AG04450 (cell line): ENCODE measurements at regions of chr2 and their contacts with region 1.

Region 1: DNA sequence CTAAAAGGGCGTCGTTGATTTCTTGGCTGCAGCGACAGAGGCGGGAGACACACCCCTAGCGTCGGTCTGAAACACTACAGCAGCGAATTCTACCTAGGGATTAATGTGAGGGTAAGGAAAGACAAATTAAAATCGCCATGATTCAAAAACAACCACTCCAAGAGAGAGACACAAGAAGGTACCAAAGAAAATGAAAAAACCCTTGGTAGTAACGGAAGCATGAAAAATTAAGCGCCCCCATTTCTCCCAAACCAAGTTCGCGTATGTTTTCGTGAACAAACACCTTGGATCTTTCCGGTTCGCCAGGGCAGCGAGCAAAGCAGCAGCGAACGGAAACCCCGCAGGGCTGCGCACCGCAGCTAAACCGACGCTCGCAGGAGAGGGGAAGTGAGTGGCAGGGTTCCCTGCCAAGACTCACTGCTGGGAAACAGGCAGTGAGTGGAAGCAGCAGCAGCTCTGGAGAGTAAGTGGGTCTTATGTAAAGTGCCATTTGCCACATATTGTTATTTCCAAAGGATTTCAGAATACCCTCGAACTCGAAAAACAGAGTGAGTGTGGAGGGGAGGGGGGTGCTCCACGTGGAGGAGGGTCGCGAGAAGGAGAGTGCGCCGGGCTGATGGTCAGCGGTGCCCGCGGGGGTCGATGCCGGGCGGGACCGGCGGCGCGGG is 1.0 kb downstream of the PPP3R1 start:
- DNase-seq: no peak
- H3K4me3 ChIP-seq: peak overlapping the region; percentile 79
- H3K27ac ChIP-seq: peak overlapping the region; percentile 83
- H3K27me3 ChIP-seq: no peaks in the 10 kb centered on the region
- CTCF ChIP-seq: peak; percentile 81

Region 2: GRCh38 chr2:68157402-68158133 is 93.8 kb before region 1 on chr2 and contains the start of gene PNO1:
- CTCF ChIA-PET with region 1: interaction called, 4 read pairs
- POLR2A ChIA-PET with region 1: interaction called, 11 read pairs
- DNase-seq: peak; percentile 87
- H3K4me3 ChIP-seq: peak within 1 kb of the TSS; percentile 97
- H3K27ac ChIP-seq: peak within 1 kb of the TSS; percentile 96
- H3K27me3 ChIP-seq: no peaks in the 10 kb centered on the region
- CTCF ChIP-seq: no peak
- polyA plus RNA-seq, gene PNO1: 11.9 and 14.2 TPM in 2 replicates